Activated naive CD4-positive, alpha-beta T cell treated with anti-CD3 and anti-CD28 coated beads, Interleukin-2, amount 10 ng/mL, durations not matched to agents 7 days and 5 days (primary cell): ENCODE measurements at regions of chrX and their contacts with region 1.

Region 1: DNA sequence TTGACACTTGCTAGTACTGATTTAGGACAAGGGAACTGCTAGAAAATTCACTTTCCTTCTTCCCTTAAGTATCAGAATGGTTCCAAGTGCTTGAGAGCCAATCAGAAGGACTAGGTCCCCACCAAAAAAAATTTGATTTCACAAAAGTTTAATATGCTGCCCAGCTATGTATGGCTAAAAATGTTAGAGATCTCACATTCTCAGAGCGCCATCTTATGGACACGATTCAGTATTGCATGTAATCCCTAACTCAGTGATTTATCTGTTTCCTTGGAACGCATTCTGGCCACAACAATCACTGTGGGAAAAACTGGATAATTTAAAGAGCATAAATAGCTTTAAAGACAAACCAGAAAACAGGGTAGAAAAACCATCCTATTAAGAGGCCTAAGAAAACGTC is 255.1 kb upstream of the GPC4 start:
- DNase-seq: no peak
- H3K4me3 Mint-ChIP-seq: no peak overlapping the region
- H3K27ac Mint-ChIP-seq: no peak overlapping the region
- H3K4me1 Mint-ChIP-seq: no peaks in the 10 kb centered on the region
- H3K27me3 Mint-ChIP-seq: no peaks in the 10 kb centered on the region

Region 2: DNA sequence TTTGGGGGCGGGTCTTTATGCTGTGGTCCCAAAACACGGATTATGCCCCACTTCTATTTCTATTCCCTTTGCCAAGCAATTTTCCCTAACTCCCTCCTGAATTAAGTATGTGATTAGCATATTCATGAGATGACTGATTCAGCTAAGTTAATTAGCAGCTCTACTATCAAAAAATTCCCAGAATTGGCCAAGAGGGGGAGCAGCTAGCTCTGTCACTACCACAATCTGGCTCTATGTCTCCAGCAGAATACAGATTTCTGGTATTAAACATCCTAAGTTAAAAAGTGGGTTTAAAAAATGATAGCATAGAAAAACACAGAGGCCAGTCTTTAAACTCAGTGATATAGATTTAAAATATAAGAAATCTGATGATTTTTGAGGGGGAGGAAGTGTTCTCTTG is 335.4 kb before region 1 on chrX:
- CTCF ChIA-PET with region 1: interaction called, 13 read pairs
- DNase-seq: peak; percentile 20
- H3K4me3 Mint-ChIP-seq: no peak overlapping the region
- H3K27ac Mint-ChIP-seq: no peak overlapping the region
- H3K4me1 Mint-ChIP-seq: no peaks in the 10 kb centered on the region
- H3K27me3 Mint-ChIP-seq: no peaks in the 10 kb centered on the region

Region 3: DNA sequence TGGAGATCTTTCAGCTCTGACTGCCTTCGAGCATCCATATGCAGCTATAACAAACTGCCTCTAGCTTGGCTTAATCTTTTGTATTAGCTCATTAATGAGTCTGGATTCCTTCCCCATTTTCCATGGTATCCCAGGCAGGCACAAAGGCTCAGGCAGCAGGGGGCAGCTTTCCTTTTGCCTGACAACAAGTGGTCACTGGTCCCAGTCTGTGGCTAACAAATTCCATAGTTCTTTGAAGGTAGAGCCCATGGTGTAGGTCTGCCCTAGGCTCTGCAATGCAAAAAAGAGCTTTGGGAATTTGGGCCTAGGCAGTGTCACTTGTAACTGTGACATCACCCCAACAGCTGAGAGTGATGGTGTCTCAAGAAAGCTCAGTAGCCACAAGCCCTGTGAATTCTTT is 20.7 kb before region 1 on chrX:
- CTCF ChIA-PET with region 1: no interaction called
- DNase-seq: no peak
- H3K4me3 Mint-ChIP-seq: no peak overlapping the region
- H3K27ac Mint-ChIP-seq: no peak overlapping the region
- H3K4me1 Mint-ChIP-seq: no peaks in the 10 kb centered on the region
- H3K27me3 Mint-ChIP-seq: no peaks in the 10 kb centered on the region

Region 4: DNA sequence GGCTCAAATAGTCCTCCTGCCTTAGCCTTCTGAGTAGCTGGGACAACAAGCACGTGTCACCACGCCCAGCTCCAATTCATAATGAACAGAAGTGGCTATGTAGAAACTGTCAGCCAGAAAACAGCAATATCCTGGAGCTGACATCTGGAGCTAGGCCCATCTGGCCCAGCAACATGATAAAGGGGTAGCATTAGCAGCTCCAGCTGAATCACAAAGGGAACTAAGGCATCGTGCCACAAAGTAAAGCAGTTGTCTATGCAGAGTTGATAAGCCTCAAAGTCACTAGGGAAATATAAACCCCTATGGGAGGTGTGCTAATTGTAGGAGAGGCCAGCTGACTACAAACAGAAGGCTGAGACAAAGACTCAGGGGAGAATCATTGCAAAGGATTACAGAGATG is 15.4 kb after region 1 on chrX:
- CTCF ChIA-PET with region 1: no interaction called
- DNase-seq: no peak
- H3K4me3 Mint-ChIP-seq: no peak overlapping the region
- H3K27ac Mint-ChIP-seq: no peak overlapping the region
- H3K4me1 Mint-ChIP-seq: peaks cover 10% of the 10 kb centered on the region
- H3K27me3 Mint-ChIP-seq: no peaks in the 10 kb centered on the region